IMR-90 (cell line): ENCODE measurements at regions of chr2 and their contacts with region 1.

Region 1: DNA sequence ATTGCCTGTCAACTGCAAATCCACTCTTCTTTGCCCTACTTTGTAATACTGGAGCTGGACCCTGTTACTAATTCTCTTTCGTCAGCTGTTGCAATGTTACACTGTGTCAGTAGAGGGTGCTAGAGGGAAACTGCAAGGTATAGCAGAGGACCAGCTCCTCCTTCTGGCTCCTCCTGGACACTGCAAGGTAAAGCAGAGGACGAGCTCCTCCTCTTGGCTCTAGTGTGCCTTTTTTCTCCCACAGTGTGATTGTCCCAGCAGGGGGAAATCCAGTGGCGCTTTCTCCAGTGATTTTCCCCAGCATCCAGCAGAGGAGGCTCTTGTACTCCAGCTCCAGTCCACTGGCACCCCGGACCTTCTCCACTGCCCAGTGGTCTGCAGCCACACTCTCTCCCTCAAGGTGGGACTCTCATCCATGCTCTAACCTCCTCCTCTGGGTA is 95.6 kb downstream of the CAPN13 start:
- DNase-seq: peak; percentile 90
- ATAC-seq: peak; percentile 90
- H3K4me3 ChIP-seq: no peak overlapping the region
- H3K27ac ChIP-seq: no peak overlapping the region
- H3K4me1 ChIP-seq: peaks cover 2% of the 10 kb centered on the region; the same call in 1 of the 2 replicates
- H3K27me3 ChIP-seq: peaks cover 5% of the 10 kb centered on the region; the same call in 1 of the 2 replicates
- CTCF ChIP-seq: peak; percentile 100
- POLR2A ChIP-seq: no peak
- RAD21 ChIP-seq: peak; percentile 93

Region 2: DNA sequence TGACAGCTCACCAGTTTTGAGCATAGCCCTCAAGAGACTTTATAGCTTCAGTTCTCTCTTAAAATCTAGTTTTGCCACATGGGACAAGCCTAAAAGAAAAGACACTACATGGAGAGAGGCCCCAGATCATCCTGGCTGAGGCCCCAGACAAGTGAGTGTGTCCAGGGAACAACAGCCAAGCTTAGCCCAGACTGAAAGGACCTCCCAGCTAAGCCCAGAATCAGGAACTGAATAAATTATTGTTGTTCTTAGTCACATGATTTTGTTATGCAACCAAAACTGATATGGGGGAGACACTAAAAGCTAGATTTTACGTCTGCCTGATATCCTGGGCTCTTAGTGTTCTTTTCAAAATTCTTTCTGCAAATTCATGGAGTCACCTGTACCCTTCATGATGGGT is 509.7 kb before region 1 on chr2:
- CTCF ChIA-PET with region 1: interaction called, 49 read pairs
- POLR2A ChIA-PET with region 1: no interaction called
- dilution Hi-C with region 1: no loop called
- in situ Hi-C with region 1: no loop called
- intact Hi-C with region 1: no loop called
- DNase-seq: peak; percentile 22
- ATAC-seq: peak; percentile 49; the same call in 1 of the 2 replicates
- H3K4me3 ChIP-seq: no peak overlapping the region
- H3K27ac ChIP-seq: no peak overlapping the region
- H3K4me1 ChIP-seq: no peaks in the 10 kb centered on the region
- H3K27me3 ChIP-seq: 0 out of 2 replicates have a peak, but pooled peaks cover 3% of the 10 kb centered on the region
- CTCF ChIP-seq: no peak
- POLR2A ChIP-seq: no peak
- RAD21 ChIP-seq: no peak

Region 3: DNA sequence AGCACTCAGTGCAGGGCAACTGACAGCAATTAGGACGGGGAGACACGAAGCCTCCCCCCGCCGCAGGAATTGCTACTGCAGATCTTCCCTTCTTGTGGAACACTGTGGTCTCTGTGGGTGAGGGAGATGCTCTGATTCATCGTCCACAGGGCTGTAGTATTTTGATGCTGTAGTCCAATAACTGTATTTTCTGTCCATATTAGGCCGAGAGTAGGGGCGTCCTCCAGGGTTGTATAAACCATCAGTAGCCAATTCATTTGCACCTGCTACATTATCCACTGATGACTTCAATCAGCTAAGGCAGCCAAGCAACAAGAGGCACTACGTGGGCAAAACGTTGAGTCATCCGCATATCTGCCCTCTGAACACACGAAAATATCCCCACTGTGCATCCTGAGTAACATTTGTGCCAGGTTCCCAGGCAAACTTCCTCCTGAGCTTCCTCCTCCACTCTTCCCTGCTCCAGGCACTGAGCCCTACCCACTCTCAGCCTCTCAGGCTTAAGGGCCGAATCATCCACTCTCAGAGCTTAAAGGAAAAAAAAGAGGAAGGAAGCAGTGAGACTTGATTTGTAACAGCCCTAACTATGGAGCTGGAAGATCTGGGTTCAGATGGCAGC is 418.3 kb before region 1 on chr2:
- CTCF ChIA-PET with region 1: interaction called, 4 read pairs
- POLR2A ChIA-PET with region 1: no interaction called
- dilution Hi-C with region 1: no loop called
- in situ Hi-C with region 1: no loop called
- intact Hi-C with region 1: loop called (anchors 2 kb)
- DNase-seq: peak; percentile 100
- ATAC-seq: peak; percentile 88
- H3K4me3 ChIP-seq: no peak overlapping the region
- H3K27ac ChIP-seq: peak overlapping the region; percentile 95
- H3K4me1 ChIP-seq: peaks cover 19% of the 10 kb centered on the region
- H3K27me3 ChIP-seq: no peaks in the 10 kb centered on the region
- CTCF ChIP-seq: no peak
- POLR2A ChIP-seq: peak; percentile 63
- RAD21 ChIP-seq: peak; percentile 47

Region 4: GRCh38 chr2:30472326-30472725 is 239.3 kb before region 1 on chr2:
- CTCF ChIA-PET with region 1: interaction called, 5 read pairs
- POLR2A ChIA-PET with region 1: no interaction called
- dilution Hi-C with region 1: no loop called
- in situ Hi-C with region 1: no loop called
- intact Hi-C with region 1: loop called (anchors 10 kb)
- DNase-seq: no peak
- ATAC-seq: no peak; the same call in 1 of the 2 replicates
- H3K4me3 ChIP-seq: no peak overlapping the region
- H3K27ac ChIP-seq: no peak overlapping the region
- H3K4me1 ChIP-seq: no peaks in the 10 kb centered on the region
- H3K27me3 ChIP-seq: no peaks in the 10 kb centered on the region
- CTCF ChIP-seq: 0 out of 2 replicates have a peak, but pooled peaks have one; percentile 5
- POLR2A ChIP-seq: no peak
- RAD21 ChIP-seq: no peak

Region 5: GRCh38 chr2:31170071-31170698 is 458.5 kb after region 1 on chr2:
- CTCF ChIA-PET with region 1: interaction called, 6 read pairs
- POLR2A ChIA-PET with region 1: no interaction called
- dilution Hi-C with region 1: no loop called
- in situ Hi-C with region 1: loop called (anchors 10 kb)
- intact Hi-C with region 1: loop called (anchors 1 kb)
- DNase-seq: peak; percentile 60
- ATAC-seq: peak; percentile 98
- H3K4me3 ChIP-seq: no peak overlapping the region
- H3K27ac ChIP-seq: no peak overlapping the region
- H3K4me1 ChIP-seq: no peaks in the 10 kb centered on the region
- H3K27me3 ChIP-seq: peaks cover 9% of the 10 kb centered on the region; the same call in 1 of the 2 replicates
- CTCF ChIP-seq: peak; percentile 83
- POLR2A ChIP-seq: no peak
- RAD21 ChIP-seq: peak; percentile 80

Region 6: DNA sequence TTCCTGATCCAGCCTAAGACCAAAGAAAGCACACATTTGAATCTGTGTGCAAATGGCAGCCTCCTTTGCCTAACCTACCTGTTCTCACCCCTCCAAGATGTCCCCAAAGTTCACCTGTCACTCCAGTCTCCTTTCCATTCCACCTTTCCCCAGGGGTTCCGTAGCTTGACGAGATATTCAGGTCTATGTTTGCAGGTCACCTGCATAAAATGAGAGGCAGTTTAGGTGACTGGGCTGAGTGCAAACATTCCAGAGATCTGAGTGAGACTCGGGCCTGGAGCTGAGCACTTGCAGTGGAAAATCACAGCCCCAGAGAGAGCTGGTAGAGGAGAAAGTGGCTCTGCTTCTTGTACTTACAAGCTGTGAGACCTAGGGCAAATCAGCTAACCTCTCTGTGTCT is 485.5 kb after region 1 on chr2:
- CTCF ChIA-PET with region 1: no interaction called
- POLR2A ChIA-PET with region 1: no interaction called
- dilution Hi-C with region 1: no loop called
- in situ Hi-C with region 1: no loop called
- intact Hi-C with region 1: no loop called
- DNase-seq: no peak
- ATAC-seq: no peak
- H3K4me3 ChIP-seq: no peak overlapping the region
- H3K27ac ChIP-seq: no peak overlapping the region
- H3K4me1 ChIP-seq: no peaks in the 10 kb centered on the region
- H3K27me3 ChIP-seq: peaks cover 13% of the 10 kb centered on the region
- CTCF ChIP-seq: no peak
- POLR2A ChIP-seq: no peak
- RAD21 ChIP-seq: no peak

Region 7: GRCh38 chr2:31523871-31524492 is 812.3 kb after region 1 on chr2:
- CTCF ChIA-PET with region 1: no interaction called
- POLR2A ChIA-PET with region 1: no interaction called
- dilution Hi-C with region 1: no loop called
- in situ Hi-C with region 1: loop called (anchors 5 kb)
- intact Hi-C with region 1: loop called (anchors 1 kb)
- DNase-seq: peak; percentile 52
- ATAC-seq: peak; percentile 78
- H3K4me3 ChIP-seq: no peak overlapping the region
- H3K27ac ChIP-seq: no peak overlapping the region
- H3K4me1 ChIP-seq: no peaks in the 10 kb centered on the region
- H3K27me3 ChIP-seq: peaks cover 10% of the 10 kb centered on the region
- CTCF ChIP-seq: peak; percentile 71
- POLR2A ChIP-seq: no peak
- RAD21 ChIP-seq: peak; percentile 57